Endothelial cell of umbilical vein (primary cell): ENCODE measurements at regions of chr2 and their contacts with region 1.

Region 1: DNA sequence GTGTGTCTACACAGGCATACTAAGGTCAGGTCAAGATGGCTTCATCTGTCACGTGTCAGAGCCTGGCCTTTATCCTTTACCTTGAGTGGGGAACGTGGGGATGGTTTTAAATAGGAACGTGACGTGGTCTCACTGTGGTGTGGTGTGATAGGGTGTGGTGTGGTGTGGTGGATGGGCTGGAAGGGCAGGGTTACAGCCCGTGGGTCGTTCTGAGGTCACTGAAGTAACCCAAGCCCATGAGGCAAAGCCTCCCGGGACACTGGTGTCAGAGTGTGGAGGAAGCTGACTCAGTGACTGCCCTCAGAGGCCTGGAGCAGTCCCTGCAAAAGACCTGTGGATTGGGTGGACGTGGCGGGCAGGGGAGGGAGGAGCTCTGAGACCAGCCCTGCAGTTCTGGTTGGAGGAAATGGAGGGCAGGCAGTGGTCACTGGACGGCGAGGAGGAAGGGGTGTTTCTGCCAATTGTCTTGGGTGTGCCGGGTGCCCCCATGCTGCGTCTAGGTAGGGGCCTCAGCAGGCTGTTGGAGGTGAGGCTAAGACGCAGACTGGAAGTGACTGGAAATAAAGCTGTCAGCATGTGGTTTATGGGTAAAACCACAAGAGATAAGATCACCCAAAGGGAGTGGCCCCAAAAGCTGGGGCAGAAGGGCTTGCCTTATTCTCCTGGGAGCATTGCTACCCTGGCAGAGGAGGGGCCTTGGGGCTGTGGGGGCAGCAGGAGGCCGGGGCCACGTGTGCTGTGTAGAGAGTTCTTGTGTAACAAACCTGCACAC is 84.8 kb downstream of the SH3RF3 start:
- DNase-seq: peak; percentile 60
- H3K4me3 ChIP-seq: no peak overlapping the region
- H3K27ac ChIP-seq: peak overlapping the region; percentile 17
- H3K4me1 ChIP-seq: peaks cover 30% of the 10 kb centered on the region
- H3K27me3 ChIP-seq: no peaks in the 10 kb centered on the region
- CTCF ChIP-seq: no peak
- POLR2A ChIP-seq: peak; percentile 11

Region 2: DNA sequence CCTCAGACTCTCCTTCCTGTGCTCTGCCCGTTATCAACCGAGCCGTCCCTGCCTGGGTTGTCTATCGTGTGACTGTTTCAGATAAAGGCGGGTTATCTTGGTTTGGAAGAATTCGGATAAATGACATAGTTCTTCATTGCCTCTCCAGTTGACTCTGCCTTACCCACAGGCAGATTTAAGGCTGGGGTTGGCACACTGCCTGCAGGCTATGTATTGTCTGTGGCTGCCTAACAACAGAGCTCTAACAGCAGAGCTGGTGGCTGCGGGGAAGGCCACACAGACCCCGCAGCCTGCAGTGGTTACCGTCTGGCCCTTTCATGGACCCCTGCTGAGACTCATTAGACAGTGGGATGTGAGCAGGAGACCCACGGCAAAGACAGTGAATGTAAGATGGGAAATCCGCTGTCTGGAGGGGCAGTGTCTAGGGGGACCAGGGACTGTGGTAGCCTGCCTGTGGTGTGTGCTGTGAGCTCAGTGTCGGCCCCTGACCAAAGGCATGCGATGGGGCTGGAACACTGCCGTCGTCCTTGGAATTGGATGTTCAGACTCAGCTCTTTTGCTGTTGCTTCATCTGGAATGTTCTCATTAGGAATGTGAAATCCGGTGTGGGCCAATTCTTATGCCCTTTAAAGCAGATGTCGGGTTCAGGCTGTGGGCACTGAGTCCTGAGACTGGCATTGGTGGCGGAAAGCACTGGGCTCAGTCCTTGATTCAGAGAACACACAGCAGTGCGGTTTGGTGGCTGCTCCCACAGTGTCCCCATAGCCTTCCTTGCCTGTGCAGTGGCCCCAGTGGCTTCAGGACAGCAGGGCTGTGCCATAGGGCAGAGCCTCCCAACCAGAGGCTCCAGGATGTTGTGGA is 40.3 kb before region 1 on chr2:
- CTCF ChIA-PET with region 1: interaction called, 5 read pairs
- POLR2A ChIA-PET with region 1: no interaction called
- dilution Hi-C with region 1: no loop called
- intact Hi-C with region 1: loop called (anchors 1 kb)
- DNase-seq: peak; percentile 82
- H3K4me3 ChIP-seq: no peak overlapping the region
- H3K27ac ChIP-seq: peak overlapping the region; percentile 90
- H3K4me1 ChIP-seq: peaks cover 55% of the 10 kb centered on the region
- H3K27me3 ChIP-seq: no peaks in the 10 kb centered on the region
- CTCF ChIP-seq: no peak
- POLR2A ChIP-seq: peak; percentile 48

Region 3: DNA sequence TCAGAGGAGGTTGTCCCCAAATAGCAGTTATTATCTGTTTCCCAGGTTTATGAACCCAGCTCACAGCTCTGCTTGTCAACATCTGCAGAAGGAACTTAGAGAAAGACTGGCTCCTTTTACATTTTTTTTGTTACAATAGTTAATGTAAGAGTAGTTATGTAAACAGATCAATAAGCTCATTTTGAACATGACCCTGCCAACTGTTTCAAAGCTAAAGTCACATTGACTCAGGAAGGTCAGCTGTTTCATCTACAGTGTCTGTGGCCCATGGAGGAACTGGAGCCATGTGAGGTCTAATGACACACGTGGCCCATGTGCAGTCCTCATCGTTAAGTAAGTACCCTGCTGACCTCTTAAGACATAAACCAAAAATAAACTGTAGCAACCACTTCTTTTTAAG is 12.3 kb after region 1 on chr2:
- CTCF ChIA-PET with region 1: interaction called, 12 read pairs
- POLR2A ChIA-PET with region 1: no interaction called
- dilution Hi-C with region 1: no loop called
- intact Hi-C with region 1: no loop called
- DNase-seq: no peak
- H3K4me3 ChIP-seq: no peak overlapping the region
- H3K27ac ChIP-seq: no peak overlapping the region
- H3K4me1 ChIP-seq: peaks cover 11% of the 10 kb centered on the region
- H3K27me3 ChIP-seq: no peaks in the 10 kb centered on the region
- CTCF ChIP-seq: no peak
- POLR2A ChIP-seq: no peak

Region 4: GRCh38 chr2:109260886-109261700 is 47.3 kb after region 1 on chr2:
- CTCF ChIA-PET with region 1: interaction called, 3 read pairs
- POLR2A ChIA-PET with region 1: no interaction called
- dilution Hi-C with region 1: no loop called
- intact Hi-C with region 1: loop called (anchors 5 kb)
- DNase-seq: no peak
- H3K4me3 ChIP-seq: no peak overlapping the region
- H3K27ac ChIP-seq: no peak overlapping the region
- H3K4me1 ChIP-seq: peaks cover 26% of the 10 kb centered on the region
- H3K27me3 ChIP-seq: no peaks in the 10 kb centered on the region
- CTCF ChIP-seq: peak; percentile 24 to 45
- POLR2A ChIP-seq: no peak